IMR-90 (cell line): ENCODE measurements at regions of chr6 and their contacts with region 1.

Region 1: DNA sequence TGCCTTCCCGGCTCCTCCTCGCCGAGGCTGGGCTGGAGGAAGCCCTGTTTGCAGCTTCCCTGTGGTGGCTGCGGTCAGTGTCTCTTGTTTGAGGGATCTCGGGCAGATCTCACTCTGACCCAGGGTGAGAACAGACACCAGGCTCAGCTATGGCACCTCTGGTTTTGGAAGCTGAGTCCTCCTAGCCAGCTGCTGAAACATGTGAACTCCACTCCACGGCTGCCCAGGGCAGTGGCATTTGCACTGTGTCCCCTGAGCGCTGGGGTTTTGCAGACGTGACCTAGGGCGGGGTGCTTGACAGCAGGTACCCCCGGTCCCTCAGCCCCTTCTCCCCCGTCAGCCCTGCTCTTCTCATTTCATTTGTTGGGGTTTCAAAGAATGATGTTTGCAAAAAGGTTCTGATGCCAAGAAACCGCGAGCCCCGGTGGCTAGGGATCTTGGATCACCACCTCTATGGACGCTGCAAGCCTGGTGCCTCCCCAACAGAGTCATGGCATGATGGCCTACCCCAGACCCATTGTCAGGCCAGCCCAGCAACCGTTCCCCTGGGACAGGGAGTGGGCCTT is 55.0 kb upstream of the DACT2 start:
- DNase-seq: no peak
- ATAC-seq: no peak
- H3K4me3 ChIP-seq: no peak overlapping the region
- H3K27ac ChIP-seq: no peak overlapping the region
- H3K4me1 ChIP-seq: no peaks in the 10 kb centered on the region
- H3K27me3 ChIP-seq: no peaks in the 10 kb centered on the region
- CTCF ChIP-seq: no peak
- POLR2A ChIP-seq: no peak
- RAD21 ChIP-seq: no peak

Region 2: DNA sequence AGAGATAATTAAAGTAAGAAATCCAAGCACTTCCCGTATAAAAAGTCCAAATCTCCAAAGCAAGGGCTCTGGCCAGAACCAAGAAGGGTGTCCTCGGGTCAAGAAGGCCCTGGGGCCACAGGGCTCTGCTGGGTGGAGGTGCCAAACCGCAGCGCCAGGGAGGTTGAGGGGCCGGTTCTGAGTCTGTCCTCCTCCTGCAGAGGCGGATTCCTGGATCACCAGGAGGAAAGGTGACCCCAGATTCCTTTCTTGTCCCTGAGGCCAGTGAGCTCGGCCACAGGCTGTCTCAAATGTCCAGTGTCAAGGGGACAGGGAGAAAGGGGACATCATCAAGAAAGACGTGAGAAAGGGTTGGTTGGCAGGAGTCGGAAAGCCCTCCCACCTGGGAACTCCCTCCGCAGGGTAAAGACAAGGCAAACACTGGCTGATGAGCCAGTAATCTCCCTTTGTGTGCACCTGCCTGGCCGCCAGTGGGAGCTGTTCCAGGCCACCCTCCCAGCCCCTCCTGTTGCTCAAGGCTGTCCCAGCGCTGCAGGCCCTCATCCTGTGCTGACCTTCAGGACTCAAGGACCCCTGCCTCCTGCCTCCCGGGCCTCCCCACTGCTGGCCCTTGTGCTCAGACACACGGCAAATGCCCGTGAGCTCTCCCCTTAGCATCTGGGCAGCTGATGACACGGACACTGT is 303.1 kb before region 1 on chr6:
- CTCF ChIA-PET with region 1: no interaction called
- POLR2A ChIA-PET with region 1: no interaction called
- dilution Hi-C with region 1: no loop called
- in situ Hi-C with region 1: no loop called
- intact Hi-C with region 1: no loop called
- DNase-seq: no peak
- ATAC-seq: 0 out of 2 replicates have a peak, but pooled peaks have one; percentile 11
- H3K4me3 ChIP-seq: no peak overlapping the region
- H3K27ac ChIP-seq: no peak overlapping the region
- H3K4me1 ChIP-seq: peaks cover 1% of the 10 kb centered on the region; the same call in 1 of the 2 replicates
- H3K27me3 ChIP-seq: peaks cover 28% of the 10 kb centered on the region
- CTCF ChIP-seq: no peak
- POLR2A ChIP-seq: no peak
- RAD21 ChIP-seq: no peak

Region 3: GRCh38 chr6:168345896-168346754 is 28.5 kb before region 1 on chr6:
- CTCF ChIA-PET with region 1: no interaction called
- POLR2A ChIA-PET with region 1: interaction called, 12 read pairs
- dilution Hi-C with region 1: no loop called
- in situ Hi-C with region 1: no loop called
- intact Hi-C with region 1: no loop called
- DNase-seq: no peak
- ATAC-seq: no peak
- H3K4me3 ChIP-seq: no peak overlapping the region
- H3K27ac ChIP-seq: no peak overlapping the region
- H3K4me1 ChIP-seq: no peaks in the 10 kb centered on the region
- H3K27me3 ChIP-seq: no peaks in the 10 kb centered on the region
- CTCF ChIP-seq: no peak
- POLR2A ChIP-seq: no peak
- RAD21 ChIP-seq: no peak

Region 4: DNA sequence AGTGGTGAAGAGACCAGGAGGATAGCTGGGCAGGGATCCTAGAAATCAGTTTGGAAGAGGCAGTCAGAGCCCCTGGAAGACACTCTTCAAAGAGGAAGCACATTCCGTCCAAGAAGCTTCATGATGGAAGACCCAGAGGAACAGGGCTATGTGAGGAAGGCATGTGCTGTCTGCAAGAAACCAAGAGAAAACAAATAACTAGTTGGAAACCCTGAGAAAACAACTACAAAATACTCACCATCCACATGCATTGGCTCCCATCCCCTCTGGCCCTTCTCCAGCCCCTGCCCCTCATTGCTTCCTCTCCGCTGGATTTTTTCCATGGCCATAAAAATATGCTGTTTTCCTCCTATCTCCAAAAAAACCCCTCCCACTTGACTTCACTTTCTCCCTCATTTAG is 25.4 kb after region 1 on chr6:
- CTCF ChIA-PET with region 1: no interaction called
- POLR2A ChIA-PET with region 1: no interaction called
- dilution Hi-C with region 1: no loop called
- in situ Hi-C with region 1: no loop called
- intact Hi-C with region 1: no loop called
- DNase-seq: no peak
- ATAC-seq: no peak
- H3K4me3 ChIP-seq: no peak overlapping the region
- H3K27ac ChIP-seq: no peak overlapping the region
- H3K4me1 ChIP-seq: no peaks in the 10 kb centered on the region
- H3K27me3 ChIP-seq: no peaks in the 10 kb centered on the region
- CTCF ChIP-seq: no peak
- POLR2A ChIP-seq: no peak
- RAD21 ChIP-seq: no peak

Region 5: GRCh38 chr6:168546151-168546550 is 171.5 kb after region 1 on chr6:
- CTCF ChIA-PET with region 1: no interaction called
- POLR2A ChIA-PET with region 1: no interaction called
- dilution Hi-C with region 1: no loop called
- in situ Hi-C with region 1: no loop called
- intact Hi-C with region 1: no loop called
- DNase-seq: no peak
- ATAC-seq: no peak
- H3K4me3 ChIP-seq: no peak overlapping the region
- H3K27ac ChIP-seq: no peak overlapping the region
- H3K4me1 ChIP-seq: no peaks in the 10 kb centered on the region
- H3K27me3 ChIP-seq: no peaks in the 10 kb centered on the region
- CTCF ChIP-seq: no peak
- POLR2A ChIP-seq: no peak
- RAD21 ChIP-seq: no peak

Region 6: GRCh38 chr6:168686831-168687730 is 312.5 kb after region 1 on chr6:
- CTCF ChIA-PET with region 1: no interaction called
- POLR2A ChIA-PET with region 1: no interaction called
- dilution Hi-C with region 1: no loop called
- in situ Hi-C with region 1: no loop called
- intact Hi-C with region 1: no loop called
- DNase-seq: no peak
- ATAC-seq: no peak
- H3K4me3 ChIP-seq: no peak overlapping the region
- H3K27ac ChIP-seq: no peak overlapping the region
- H3K4me1 ChIP-seq: no peaks in the 10 kb centered on the region
- H3K27me3 ChIP-seq: no peaks in the 10 kb centered on the region
- CTCF ChIP-seq: no peak
- POLR2A ChIP-seq: no peak
- RAD21 ChIP-seq: no peak